ENCODE measurements at regions of chr16 and their contacts with region 1.

Region 1: GRCh38 chr16:9008601-9009260 is 45.0 kb upstream of the USP7 start:
- DNase-seq: peak; percentile 38 to 90 (median 76)
- ATAC-seq: peak; percentile 99
- H3K4me3 ChIP-seq: no peak overlapping the region
- H3K27ac ChIP-seq: no peak overlapping the region
- H3K4me1 ChIP-seq: peaks cover 0 to 14% of the 10 kb centered on the region in 2 donors
- H3K27me3 ChIP-seq: peaks cover 0 to 32% of the 10 kb centered on the region in 2 donors
- CTCF ChIP-seq: peak; percentile 81 to 87

Region 2: DNA sequence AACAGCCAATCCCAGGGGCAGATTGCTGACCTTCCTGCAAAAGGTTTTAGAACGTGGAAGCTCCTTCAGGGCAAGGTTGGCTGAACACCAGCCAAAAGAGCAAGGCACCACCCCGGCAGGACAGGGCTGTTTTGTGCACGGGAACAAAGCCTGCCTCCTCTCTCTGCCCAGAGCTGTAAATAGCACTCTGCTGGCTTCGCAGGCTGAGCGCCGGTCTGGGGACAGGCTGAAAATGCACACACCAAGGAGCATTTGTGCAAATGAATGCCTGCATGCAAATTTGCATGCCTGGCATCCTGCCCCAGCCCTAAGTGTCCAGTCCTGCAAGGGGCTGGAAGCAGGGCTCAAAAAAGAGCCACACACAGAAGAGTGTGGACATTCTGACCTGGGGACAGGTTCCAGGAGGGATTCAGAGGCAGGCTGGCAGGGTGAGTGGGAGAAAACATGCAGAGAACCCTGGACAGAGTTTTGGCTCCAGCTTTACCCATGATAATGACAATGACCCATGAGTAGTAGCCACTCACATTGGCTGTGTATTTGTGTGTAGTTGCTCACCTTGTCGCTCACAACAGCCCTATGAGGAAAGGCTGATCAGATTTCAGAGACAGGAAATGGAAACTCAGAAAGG is 322.6 kb before region 1 on chr16:
- intact Hi-C with region 1: no loop called
- DNase-seq: no peak
- ATAC-seq: no peak
- H3K4me3 ChIP-seq: no peak overlapping the region
- H3K27ac ChIP-seq: no peak overlapping the region
- H3K4me1 ChIP-seq: no peaks in the 10 kb centered on the region
- H3K27me3 ChIP-seq: no peaks in the 10 kb centered on the region
- CTCF ChIP-seq: no peak

Region 3: GRCh38 chr16:8905168-8905762 is 103.5 kb before region 1 on chr16:
- intact Hi-C with region 1: loop called in 1 of 2 experiments (anchors 10 kb)
- DNase-seq: no peak
- ATAC-seq: peak; percentile 64
- H3K4me3 ChIP-seq: no peak overlapping the region
- H3K27ac ChIP-seq: no peak overlapping the region
- H3K4me1 ChIP-seq: peaks cover 0 to 4% of the 10 kb centered on the region in 2 donors
- H3K27me3 ChIP-seq: no peaks in the 10 kb centered on the region
- CTCF ChIP-seq: no peak

Region 4: GRCh38 chr16:9061358-9061813 is 52.7 kb after region 1 on chr16:
- intact Hi-C with region 1: no loop called
- DNase-seq: peak in 1 of 4 donors; percentile 39
- ATAC-seq: peak; percentile 68
- H3K4me3 ChIP-seq: no peak overlapping the region
- H3K27ac ChIP-seq: no peak overlapping the region
- H3K4me1 ChIP-seq: peaks cover 2 to 12% of the 10 kb centered on the region in 2 donors
- H3K27me3 ChIP-seq: no peaks in the 10 kb centered on the region
- CTCF ChIP-seq: no peak

Region 5: GRCh38 chr16:9225611-9226316 is 217.0 kb after region 1 on chr16:
- intact Hi-C with region 1: no loop called
- DNase-seq: no peak
- ATAC-seq: no peak
- H3K4me3 ChIP-seq: no peak overlapping the region
- H3K27ac ChIP-seq: no peak overlapping the region
- H3K4me1 ChIP-seq: no peaks in the 10 kb centered on the region
- H3K27me3 ChIP-seq: no peaks in the 10 kb centered on the region
- CTCF ChIP-seq: peak in 1 of 2 donors; percentile 14

Measured in left lung (tissue), 14 donors.